ENCODE measurements at regions of chr22 and their contacts with region 1.

Region 1: GRCh38 chr22:46129390-46130041 is 20.8 kb upstream of the PPARA start:
- DNase-seq: peak; percentile 76 to 82
- ATAC-seq: peak; percentile 19 to 76 (median 56)
- H3K4me3 ChIP-seq: peak overlapping the region in 2 of 10 donors; percentile 12 to 20
- H3K27ac ChIP-seq: peak overlapping the region in 9 of 10 donors; percentile 28 to 90 (median 69)
- H3K4me1 ChIP-seq: peaks cover 0 to 19% (median 10%) of the 10 kb centered on the region in 9 donors
- H3K27me3 ChIP-seq: no peaks in the 10 kb centered on the region
- CTCF ChIP-seq: no peak

Region 2: GRCh38 chr22:46027192-46028105 is 102.1 kb before region 1 on chr22:
- intact Hi-C with region 1: no loop called
- DNase-seq: peak in 1 of 2 donors; percentile 81
- ATAC-seq: peak; percentile 56 to 85 (median 72)
- H3K4me3 ChIP-seq: peak overlapping the region in 9 of 10 donors; percentile 32 to 61 (median 53)
- H3K27ac ChIP-seq: peak overlapping the region; percentile 66 to 90 (median 84)
- H3K4me1 ChIP-seq: peaks cover 6 to 47% (median 17%) of the 10 kb centered on the region in 9 donors
- H3K27me3 ChIP-seq: peaks cover 0 to 14% (median 0%) of the 10 kb centered on the region in 7 donors
- CTCF ChIP-seq: peak in 6 of 9 donors; percentile 5 to 58 (median 44)

Region 3: DNA sequence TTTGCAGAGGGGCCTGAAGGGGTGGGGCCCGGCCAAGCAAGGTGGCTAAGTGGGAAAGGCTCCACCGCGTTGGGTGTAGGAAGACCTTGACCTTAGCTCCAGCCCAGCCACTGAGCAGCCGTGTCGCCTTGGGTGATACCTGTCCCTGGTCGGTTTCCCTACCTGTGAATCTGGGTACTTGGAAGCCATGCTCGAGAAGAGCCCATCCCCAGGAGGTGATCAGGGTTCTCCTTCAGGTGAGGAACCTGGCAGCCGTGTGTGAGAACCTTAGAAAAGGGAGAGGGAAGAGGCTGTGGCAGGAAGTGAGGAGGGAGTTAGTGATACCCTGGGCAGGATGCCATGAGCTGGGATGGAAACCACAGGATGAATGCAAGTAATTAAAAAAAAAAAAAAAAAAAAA is 42.4 kb after region 1 on chr22:
- intact Hi-C with region 1: no loop called
- DNase-seq: no peak
- ATAC-seq: peak in 6 of 8 donors; percentile 8 to 43 (median 26)
- H3K4me3 ChIP-seq: no peak overlapping the region
- H3K27ac ChIP-seq: peak overlapping the region in 6 of 10 donors; percentile 1 to 61 (median 52)
- H3K4me1 ChIP-seq: peaks cover 16 to 34% (median 31%) of the 10 kb centered on the region in 9 donors
- H3K27me3 ChIP-seq: no peaks in the 10 kb centered on the region
- CTCF ChIP-seq: no peak

Region 4: GRCh38 chr22:46309526-46310085 is 180.1 kb after region 1 on chr22:
- intact Hi-C with region 1: loop called in 1 of 10 experiments (anchors 2 kb)
- DNase-seq: peak in 1 of 2 donors; percentile 36
- ATAC-seq: peak; percentile 67 to 89 (median 77)
- H3K4me3 ChIP-seq: no peak overlapping the region
- H3K27ac ChIP-seq: peak overlapping the region in 2 of 10 donors; percentile 5 to 28
- H3K4me1 ChIP-seq: peaks cover 0 to 10% (median 0%) of the 10 kb centered on the region in 9 donors
- H3K27me3 ChIP-seq: no peaks in the 10 kb centered on the region
- CTCF ChIP-seq: no peak

Measured in heart right ventricle (tissue), 16 donors.